ENCODE measurements at regions of chr1 and their contacts with region 1.

Region 1: GRCh38 chr1:204806943-204807687 is 63.5 kb upstream of the NFASC start:
- DNase-seq: peak; percentile 90
- CTCF ChIP-seq: peak; percentile 99

Region 2: GRCh38 chr1:204162231-204163074 is 644.7 kb before region 1 on chr1:
- CTCF ChIA-PET with region 1: interaction called, 13 read pairs
- POLR2A ChIA-PET with region 1: no interaction called
- DNase-seq: peak; percentile 85
- CTCF ChIP-seq: peak; percentile 98

Region 3: GRCh38 chr1:204323887-204324286 is 483.2 kb before region 1 on chr1:
- CTCF ChIA-PET with region 1: no interaction called
- POLR2A ChIA-PET with region 1: no interaction called
- DNase-seq: no peak
- CTCF ChIP-seq: no peak

Region 4: GRCh38 chr1:204446370-204447111 is 360.6 kb before region 1 on chr1:
- CTCF ChIA-PET with region 1: interaction called, 25 read pairs
- POLR2A ChIA-PET with region 1: no interaction called
- DNase-seq: peak; percentile 88
- CTCF ChIP-seq: peak; percentile 83

Region 5: GRCh38 chr1:204530932-204531331 is 276.2 kb before region 1 on chr1:
- CTCF ChIA-PET with region 1: interaction called, 10 read pairs
- POLR2A ChIA-PET with region 1: no interaction called
- DNase-seq: peak; percentile 70
- CTCF ChIP-seq: no peak

Region 6: GRCh38 chr1:204578867-204579664 is 228.0 kb before region 1 on chr1:
- CTCF ChIA-PET with region 1: interaction called, 61 read pairs
- POLR2A ChIA-PET with region 1: no interaction called
- DNase-seq: peak; percentile 74
- CTCF ChIP-seq: no peak

Region 7: GRCh38 chr1:204746838-204747442 is 60.2 kb before region 1 on chr1:
- CTCF ChIA-PET with region 1: interaction called, 11 read pairs
- POLR2A ChIA-PET with region 1: no interaction called
- DNase-seq: peak; percentile 52
- CTCF ChIP-seq: peak; percentile 86

Region 8: GRCh38 chr1:204791453-204792353 is 15.4 kb before region 1 on chr1:
- CTCF ChIA-PET with region 1: interaction called, 208 read pairs
- POLR2A ChIA-PET with region 1: no interaction called
- DNase-seq: peak; percentile 74
- CTCF ChIP-seq: peak; percentile 85

Region 9: GRCh38 chr1:205013683-205014367 is 206.7 kb after region 1 on chr1:
- CTCF ChIA-PET with region 1: no interaction called
- POLR2A ChIA-PET with region 1: no interaction called
- DNase-seq: no peak
- CTCF ChIP-seq: no peak